ENCODE measurements at regions of chr5 and their contacts with region 1.

Region 1: DNA sequence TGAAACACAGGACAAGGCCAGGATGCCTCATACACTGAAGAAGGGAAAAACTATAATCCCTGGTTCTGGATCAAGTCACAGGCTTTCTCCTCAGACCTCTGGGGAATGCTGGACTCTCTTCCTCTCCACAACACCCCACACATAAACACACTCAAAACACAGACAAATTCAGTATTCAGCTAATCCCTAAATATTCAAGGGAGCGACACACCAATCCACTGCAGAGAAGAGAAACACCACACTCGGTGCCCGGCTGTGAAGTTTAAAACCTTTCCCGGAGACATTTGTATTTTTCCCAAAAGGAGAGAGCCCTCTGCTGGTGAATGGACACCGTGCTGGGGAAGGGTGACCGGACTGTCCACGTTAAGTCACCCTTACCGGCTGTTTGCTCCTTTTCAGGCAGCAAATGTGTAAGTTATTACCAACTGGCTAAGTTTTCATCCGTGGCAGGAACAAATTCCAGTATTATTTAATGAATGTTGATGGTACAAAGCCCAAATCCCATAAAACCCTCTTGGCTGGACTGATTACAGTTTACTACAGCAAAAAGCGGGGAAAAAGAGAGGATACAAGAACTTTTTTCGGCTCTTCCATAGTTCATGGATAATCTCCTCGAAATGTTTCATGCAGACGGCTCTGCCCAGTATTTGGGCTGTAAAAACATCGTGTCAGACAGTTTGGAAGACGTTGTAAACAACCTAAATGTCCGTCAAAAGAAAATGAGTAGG is 130.9 kb upstream of the SLC30A5 start:
- DNase-seq: peak; percentile 64 to 72 (median 66)
- ATAC-seq: peak; percentile 86
- H3K4me3 ChIP-seq: no peak overlapping the region
- H3K27ac ChIP-seq: peak overlapping the region in 1 of 4 donors; percentile 10
- H3K4me1 ChIP-seq: peaks cover 4% of the 10 kb centered on the region
- H3K27me3 ChIP-seq: no peaks in the 10 kb centered on the region
- CTCF ChIP-seq: peak; percentile 71 to 79 (median 75)
- POLR2A ChIP-seq: no peak

Region 2: GRCh38 chr5:68290260-68290674 is 672.7 kb before region 1 on chr5:
- intact Hi-C with region 1: loop called (anchors 10 kb)
- DNase-seq: peak; percentile 34 to 67 (median 48)
- ATAC-seq: no peak
- H3K4me3 ChIP-seq: no peak overlapping the region
- H3K27ac ChIP-seq: peak overlapping the region in 2 of 4 donors; percentile 91 to 92
- H3K4me1 ChIP-seq: peaks cover 64% of the 10 kb centered on the region
- H3K27me3 ChIP-seq: no peaks in the 10 kb centered on the region
- CTCF ChIP-seq: no peak
- POLR2A ChIP-seq: no peak

Region 3: DNA sequence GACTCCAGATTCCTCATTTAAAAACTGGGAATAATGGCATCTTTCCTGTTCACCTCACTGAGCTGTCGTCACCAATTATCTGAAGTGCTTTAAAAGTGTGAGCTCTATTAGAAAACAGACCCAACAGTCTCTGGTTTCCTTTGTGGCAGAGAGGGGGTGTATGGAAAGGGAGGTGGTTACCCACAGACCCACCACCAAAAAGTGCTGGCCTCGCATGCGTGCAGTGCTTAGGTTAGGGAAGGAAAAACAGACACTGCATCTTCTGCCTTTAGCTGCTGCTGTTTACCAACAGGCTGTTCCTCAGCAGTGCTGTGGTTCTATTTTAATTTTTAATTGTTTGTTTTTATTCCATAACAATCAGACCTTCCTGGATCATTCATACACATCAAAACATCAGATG is 497.8 kb before region 1 on chr5:
- intact Hi-C with region 1: no loop called
- DNase-seq: no peak
- ATAC-seq: no peak
- H3K4me3 ChIP-seq: no peak overlapping the region
- H3K27ac ChIP-seq: no peak overlapping the region
- H3K4me1 ChIP-seq: peaks cover 2% of the 10 kb centered on the region
- H3K27me3 ChIP-seq: no peaks in the 10 kb centered on the region
- CTCF ChIP-seq: no peak
- POLR2A ChIP-seq: no peak

Region 4: DNA sequence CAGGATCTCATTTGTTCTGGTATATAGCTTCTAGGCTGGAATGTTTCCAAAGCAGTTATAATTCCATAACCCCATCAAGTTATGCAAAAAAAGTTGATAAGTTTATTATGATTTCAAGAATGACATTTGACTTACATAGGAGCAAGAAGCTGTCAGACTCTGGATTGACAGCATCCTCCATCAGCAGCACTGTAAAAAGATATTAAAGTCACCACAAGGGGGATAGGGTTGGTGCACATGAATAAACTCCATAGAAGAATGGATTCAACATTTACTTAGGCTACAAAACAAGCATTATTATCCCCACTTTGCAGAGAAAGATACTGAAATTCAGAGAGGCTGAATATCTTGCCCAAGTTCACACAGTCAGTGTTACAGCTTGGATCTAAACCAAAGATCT is 78.0 kb before region 1 on chr5:
- intact Hi-C with region 1: no loop called
- DNase-seq: no peak
- ATAC-seq: no peak
- H3K4me3 ChIP-seq: no peak overlapping the region
- H3K27ac ChIP-seq: no peak overlapping the region
- H3K4me1 ChIP-seq: no peaks in the 10 kb centered on the region
- H3K27me3 ChIP-seq: no peaks in the 10 kb centered on the region
- CTCF ChIP-seq: no peak
- POLR2A ChIP-seq: no peak

Region 5: DNA sequence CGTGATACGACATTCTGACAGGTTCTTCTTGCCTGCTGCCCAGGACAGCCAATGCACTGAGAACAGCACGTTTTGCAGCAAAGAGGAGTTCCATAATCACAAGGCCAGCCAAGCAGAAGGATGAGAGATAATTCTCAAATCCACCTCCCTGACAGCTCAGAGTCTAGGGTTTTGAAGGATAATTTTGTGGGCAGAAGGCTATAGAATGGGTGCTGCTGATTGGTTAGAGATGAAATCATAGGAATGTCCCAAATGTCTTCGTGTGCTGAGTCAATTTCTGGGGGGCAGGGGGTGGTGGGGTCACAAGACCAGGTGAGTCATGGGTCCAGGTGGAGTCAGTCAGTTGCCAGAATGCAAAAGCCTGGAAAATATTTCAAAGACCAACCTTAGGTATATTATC is 44.6 kb before region 1 on chr5:
- intact Hi-C with region 1: no loop called
- DNase-seq: no peak
- ATAC-seq: no peak
- H3K4me3 ChIP-seq: no peak overlapping the region
- H3K27ac ChIP-seq: no peak overlapping the region
- H3K4me1 ChIP-seq: no peaks in the 10 kb centered on the region
- H3K27me3 ChIP-seq: no peaks in the 10 kb centered on the region
- CTCF ChIP-seq: no peak
- POLR2A ChIP-seq: no peak

Region 6: GRCh38 chr5:69250598-69250997 is 287.7 kb after region 1 on chr5:
- intact Hi-C with region 1: no loop called
- DNase-seq: no peak
- ATAC-seq: no peak
- H3K4me3 ChIP-seq: no peak overlapping the region
- H3K27ac ChIP-seq: no peak overlapping the region
- H3K4me1 ChIP-seq: no peaks in the 10 kb centered on the region
- H3K27me3 ChIP-seq: no peaks in the 10 kb centered on the region
- CTCF ChIP-seq: no peak
- POLR2A ChIP-seq: no peak

Measured in body of pancreas (tissue), 4 donors.